Mammary epithelial cell (primary cell): ENCODE measurements at regions of chr3 and their contacts with region 1.

Region 1: DNA sequence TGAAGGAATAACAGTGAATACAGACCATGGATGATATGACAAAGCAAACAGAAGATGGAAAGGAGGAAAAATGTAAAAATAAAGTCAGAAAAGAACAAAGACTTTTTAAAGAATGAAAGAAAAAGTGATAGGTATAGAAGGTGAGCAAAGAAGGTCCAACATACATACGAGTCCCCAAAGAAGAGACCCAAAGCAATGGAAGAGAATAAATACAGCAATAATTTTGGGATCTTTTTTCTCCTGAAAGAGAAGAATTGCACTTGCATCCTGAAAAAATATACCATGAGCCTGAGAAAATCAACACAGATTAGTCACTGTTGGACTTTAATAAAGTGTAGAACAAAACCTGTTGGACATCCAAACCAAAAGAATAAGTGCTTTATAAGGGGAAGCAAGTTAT is 85.3 kb upstream of the SLC6A1 start:
- DNase-seq: no peak
- H3K4me3 ChIP-seq: no peak overlapping the region
- H3K27ac ChIP-seq: no peak overlapping the region
- H3K4me1 ChIP-seq: peaks cover 11% of the 10 kb centered on the region
- H3K27me3 ChIP-seq: no peaks in the 10 kb centered on the region
- CTCF ChIP-seq: no peak

Region 2: DNA sequence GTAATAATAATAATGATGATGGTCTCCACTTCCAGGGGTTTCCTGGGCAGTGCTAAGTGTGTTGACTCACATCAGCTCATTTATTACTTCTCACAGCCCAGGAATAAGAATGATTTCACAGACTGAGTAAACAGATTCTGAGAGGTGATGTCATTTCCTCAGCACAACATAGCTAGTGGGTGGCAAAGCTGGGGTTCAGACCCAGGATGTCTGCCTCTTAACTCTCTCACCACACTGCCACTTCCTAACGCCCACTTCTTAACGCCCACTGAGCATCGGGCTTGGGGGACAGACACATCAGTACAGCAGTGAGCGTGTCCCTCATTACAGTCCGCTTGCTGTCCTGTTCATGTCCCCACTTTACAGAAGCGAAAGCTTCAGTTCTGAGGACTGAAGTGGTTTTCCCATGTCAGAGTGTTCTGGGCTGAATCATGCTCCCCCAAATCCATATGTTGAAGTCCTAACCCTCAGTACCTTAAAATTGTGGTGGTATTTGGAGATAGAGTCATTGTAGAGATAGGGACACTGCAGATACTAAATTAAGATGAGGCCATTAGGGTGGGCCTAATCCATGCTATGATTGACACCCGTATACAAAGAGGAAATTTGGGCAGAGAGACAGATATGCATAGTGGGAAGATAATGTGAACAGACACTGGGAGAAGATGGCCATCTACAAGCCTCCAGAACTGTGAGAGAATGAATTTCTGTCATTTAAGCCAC is 469.8 kb before region 1 on chr3:
- CTCF ChIA-PET with region 1: no interaction called
- dilution Hi-C with region 1: loop called (anchors 5 kb)
- in situ Hi-C with region 1: no loop called
- intact Hi-C with region 1: no loop called
- DNase-seq: peak; percentile 17
- H3K4me3 ChIP-seq: no peak overlapping the region
- H3K27ac ChIP-seq: no peak overlapping the region
- H3K4me1 ChIP-seq: no peaks in the 10 kb centered on the region
- H3K27me3 ChIP-seq: no peaks in the 10 kb centered on the region
- CTCF ChIP-seq: no peak

Region 3: DNA sequence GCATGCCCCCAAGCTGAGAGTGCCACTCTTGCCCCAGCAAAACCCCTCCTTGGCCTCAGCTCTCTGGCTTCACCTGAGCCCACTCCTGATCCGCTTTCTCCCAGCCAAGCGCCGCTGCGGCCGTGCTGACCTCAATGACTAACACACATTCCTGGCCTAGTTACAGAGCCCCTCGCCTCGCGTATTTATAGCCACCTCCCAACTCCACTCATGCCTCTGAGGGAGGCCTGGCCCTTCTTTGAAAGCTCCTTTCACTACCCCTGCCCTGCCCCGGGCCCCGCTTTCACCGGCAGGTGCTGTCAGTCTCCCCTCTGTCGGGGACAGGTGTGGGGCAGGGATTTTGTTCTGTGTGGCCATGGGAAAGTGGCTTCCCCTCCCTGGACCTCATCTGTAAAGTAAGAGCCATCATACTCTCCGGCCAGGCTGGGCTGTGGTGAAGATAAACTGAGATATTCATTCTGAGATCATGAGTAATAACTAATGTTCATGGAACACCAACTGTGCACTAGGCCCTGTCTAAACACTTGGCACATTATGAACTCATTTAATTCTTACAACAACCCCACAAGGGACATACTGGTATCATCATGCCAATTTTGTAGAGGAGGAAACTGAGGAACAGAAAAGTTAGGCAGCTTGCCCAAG is 388.6 kb before region 1 on chr3:
- CTCF ChIA-PET with region 1: no interaction called
- dilution Hi-C with region 1: loop called (anchors 5 kb)
- in situ Hi-C with region 1: no loop called
- intact Hi-C with region 1: no loop called
- DNase-seq: no peak
- H3K4me3 ChIP-seq: no peak overlapping the region
- H3K27ac ChIP-seq: no peak overlapping the region
- H3K4me1 ChIP-seq: no peaks in the 10 kb centered on the region
- H3K27me3 ChIP-seq: peaks cover 6% of the 10 kb centered on the region
- CTCF ChIP-seq: no peak

Region 4: GRCh38 chr3:10964537-10965167 is 57.4 kb after region 1 on chr3:
- CTCF ChIA-PET with region 1: no interaction called
- dilution Hi-C with region 1: loop called (anchors 5 kb)
- in situ Hi-C with region 1: no loop called
- intact Hi-C with region 1: no loop called
- DNase-seq: peak; percentile 11
- H3K4me3 ChIP-seq: no peak overlapping the region
- H3K27ac ChIP-seq: no peak overlapping the region
- H3K4me1 ChIP-seq: no peaks in the 10 kb centered on the region
- H3K27me3 ChIP-seq: peaks cover 14% of the 10 kb centered on the region
- CTCF ChIP-seq: no peak